ENCODE measurements at regions of chr5 and their contacts with region 1.

Region 1: GRCh38 chr5:138503487-138504270 is 38.4 kb downstream of the EGR1 start:
- DNase-seq: no peak
- H3K4me3 ChIP-seq: no peak overlapping the region
- H3K27ac ChIP-seq: no peak overlapping the region
- H3K4me1 ChIP-seq: no peaks in the 10 kb centered on the region
- H3K27me3 ChIP-seq: no peaks in the 10 kb centered on the region
- CTCF ChIP-seq: peak; percentile 55 to 90 (median 85)
- EP300 ChIP-seq: no peak
- POLR2A ChIP-seq: 0 out of 3 replicates have a peak, but pooled peaks of 1 of the 2 experiments have one; percentile 33
- RAD21 ChIP-seq: peak; percentile 85 to 88

Region 2: DNA sequence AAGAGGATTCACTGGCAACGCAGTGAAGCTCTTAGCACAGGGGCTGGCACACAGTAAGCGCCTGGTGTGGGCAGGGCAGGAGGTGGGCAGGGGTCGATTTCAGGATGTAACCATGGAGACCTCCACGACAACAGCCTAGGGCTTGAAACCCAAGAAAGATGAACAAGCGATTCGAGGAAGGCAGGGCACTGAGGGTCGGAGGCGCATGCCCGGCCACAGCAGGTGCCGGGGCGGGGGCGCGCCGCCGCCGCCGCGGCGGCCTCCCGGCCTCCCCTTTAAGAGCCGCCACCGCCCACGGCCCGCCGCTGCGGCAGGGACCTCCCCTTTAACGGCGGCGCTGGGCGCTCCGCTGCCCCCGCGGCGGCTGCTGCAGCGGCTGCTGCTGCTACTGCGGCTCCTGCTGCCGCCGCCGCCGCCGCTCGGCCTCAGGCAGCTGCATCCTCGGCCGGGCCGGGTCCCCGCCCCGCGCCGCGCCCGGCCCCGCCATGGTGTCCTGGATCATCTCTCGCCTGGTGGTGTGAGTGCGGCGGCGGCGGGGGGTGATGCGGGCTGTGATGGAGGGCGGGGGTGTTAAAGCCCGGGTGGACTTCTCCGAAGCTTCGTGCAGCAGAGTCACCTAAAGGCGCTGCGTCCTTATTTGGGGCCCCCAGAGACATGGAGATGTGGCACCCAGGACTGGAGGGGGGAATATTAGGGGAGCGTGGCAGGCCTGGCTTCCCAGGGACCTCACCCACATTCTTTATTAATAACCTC is 64.8 kb before region 1 on chr5 and contains the start of gene REEP2:
- CTCF ChIA-PET with region 1: interaction called, 532 read pairs
- POLR2A ChIA-PET with region 1: interaction called, 17 read pairs
- DNase-seq: peak; percentile 34 to 72
- H3K4me3 ChIP-seq: peak within 1 kb of the TSS; percentile 74 to 98 (median 84)
- H3K27ac ChIP-seq: no peak within 1 kb of the TSS
- H3K4me1 ChIP-seq: peaks cover 0 to 20% (median 14%) of the 10 kb centered on the region in 4 experiments; a peak in 6 of 7 replicates
- H3K27me3 ChIP-seq: no peaks in the 10 kb centered on the region
- CTCF ChIP-seq: no peak
- EP300 ChIP-seq: peak in 1 of 2 experiments; percentile 85; a peak in 1 of 3 replicates
- POLR2A ChIP-seq: no peak
- RAD21 ChIP-seq: no peak
- total RNA-seq, gene REEP2: 40.2 and 41.4 TPM in 2 replicates

Region 3: DNA sequence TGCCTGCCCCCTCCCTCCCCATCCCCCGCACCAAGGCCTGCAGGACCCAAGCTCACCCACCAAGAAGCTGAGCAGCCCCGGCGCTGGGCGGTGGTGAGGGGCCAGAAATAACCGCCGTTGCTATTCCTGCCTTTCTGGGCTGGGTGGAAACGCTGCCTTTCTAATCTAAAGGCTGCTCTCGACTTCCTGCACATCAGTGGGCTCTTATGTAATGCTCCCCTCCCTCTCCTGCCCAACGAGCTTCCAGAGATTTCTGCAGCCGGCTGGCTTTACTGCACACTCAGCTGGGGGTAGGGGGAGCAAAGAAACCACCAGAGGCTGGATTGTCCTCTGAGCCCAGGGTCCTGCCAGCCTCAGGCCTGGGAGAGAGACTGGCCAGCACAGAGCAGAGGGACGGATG is 45.3 kb before region 1 on chr5:
- CTCF ChIA-PET with region 1: interaction called, 532 read pairs
- POLR2A ChIA-PET with region 1: interaction called, 294 read pairs
- DNase-seq: no peak
- H3K4me3 ChIP-seq: no peak overlapping the region
- H3K27ac ChIP-seq: no peak overlapping the region
- H3K4me1 ChIP-seq: peaks cover 0 to 14% (median 7%) of the 10 kb centered on the region in 4 experiments; a peak in 4 of 7 replicates
- H3K27me3 ChIP-seq: no peaks in the 10 kb centered on the region
- CTCF ChIP-seq: no peak
- EP300 ChIP-seq: no peak
- POLR2A ChIP-seq: no peak
- RAD21 ChIP-seq: no peak

Region 4: GRCh38 chr5:138482638-138483037 is 21.0 kb before region 1 on chr5:
- CTCF ChIA-PET with region 1: interaction called, 34 read pairs
- POLR2A ChIA-PET with region 1: interaction called, 10 read pairs
- DNase-seq: no peak
- H3K4me3 ChIP-seq: no peak overlapping the region
- H3K27ac ChIP-seq: no peak overlapping the region
- H3K4me1 ChIP-seq: no peaks in the 10 kb centered on the region
- H3K27me3 ChIP-seq: no peaks in the 10 kb centered on the region
- CTCF ChIP-seq: no peak
- EP300 ChIP-seq: no peak
- POLR2A ChIP-seq: no peak
- RAD21 ChIP-seq: no peak

Region 5: GRCh38 chr5:138515556-138516245 is 12.0 kb after region 1 on chr5:
- CTCF ChIA-PET with region 1: interaction called, 24 read pairs
- POLR2A ChIA-PET with region 1: interaction called, 11 read pairs
- DNase-seq: no peak
- H3K4me3 ChIP-seq: no peak overlapping the region
- H3K27ac ChIP-seq: no peak overlapping the region
- H3K4me1 ChIP-seq: no peaks in the 10 kb centered on the region
- H3K27me3 ChIP-seq: no peaks in the 10 kb centered on the region
- CTCF ChIP-seq: no peak
- EP300 ChIP-seq: no peak
- POLR2A ChIP-seq: no peak
- RAD21 ChIP-seq: no peak

Region 6: GRCh38 chr5:138542956-138543729 is 39.5 kb after region 1 on chr5 and contains the start of gene ETF1:
- CTCF ChIA-PET with region 1: interaction called, 16 read pairs
- POLR2A ChIA-PET with region 1: interaction called, 13 read pairs
- DNase-seq: peak; percentile 98
- H3K4me3 ChIP-seq: peak within 1 kb of the TSS; percentile 89 to 100 (median 95)
- H3K27ac ChIP-seq: peak within 1 kb of the TSS; percentile 100
- H3K4me1 ChIP-seq: peaks cover 0 to 16% (median 2%) of the 10 kb centered on the region in 4 experiments; a peak in 4 of 7 replicates
- H3K27me3 ChIP-seq: no peaks in the 10 kb centered on the region
- CTCF ChIP-seq: no peak
- EP300 ChIP-seq: peak in 1 of 2 experiments; percentile 72; a peak in 2 of 3 replicates
- POLR2A ChIP-seq: peak; percentile 77 to 82
- RAD21 ChIP-seq: no peak
- total RNA-seq, gene ETF1: 168 TPM in 2 replicates

Region 7: DNA sequence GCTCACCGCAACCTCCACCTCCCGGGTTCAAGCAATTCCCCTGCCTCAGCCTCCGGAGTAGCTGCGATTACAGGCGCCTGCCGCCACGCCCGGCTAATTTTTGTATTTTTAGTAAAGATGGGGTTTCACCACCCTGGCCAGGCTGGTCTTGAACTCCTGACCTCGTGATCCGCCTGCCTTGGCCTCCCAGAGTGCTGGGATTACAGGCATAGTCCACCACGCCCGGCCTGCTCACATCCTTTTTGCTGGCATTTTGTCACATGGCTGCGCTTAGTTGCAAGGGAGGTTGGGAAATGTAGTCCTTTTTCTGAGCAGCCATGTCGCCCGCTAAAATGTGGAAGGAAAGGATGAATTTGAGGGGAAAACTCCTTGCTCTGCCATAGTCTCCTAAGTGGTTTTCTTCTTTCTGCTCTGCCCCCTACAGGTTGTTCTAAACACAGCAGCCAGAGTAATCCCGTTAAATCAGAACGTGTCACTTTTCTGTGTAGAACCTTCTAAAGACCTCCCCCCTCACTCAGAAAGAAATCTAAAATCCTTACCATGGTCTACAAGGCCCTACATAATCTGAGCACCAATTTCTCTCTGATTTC is 129.3 kb after region 1 on chr5:
- CTCF ChIA-PET with region 1: no interaction called
- POLR2A ChIA-PET with region 1: no interaction called
- DNase-seq: peak; percentile 75 to 87
- H3K4me3 ChIP-seq: no peak overlapping the region
- H3K27ac ChIP-seq: no peak overlapping the region
- H3K4me1 ChIP-seq: no peaks in the 10 kb centered on the region; a peak in 1 of 7 replicates
- H3K27me3 ChIP-seq: no peaks in the 10 kb centered on the region
- CTCF ChIP-seq: peak in 2 of 3 experiments; percentile 68 to 80; a peak in 3 of 4 replicates
- EP300 ChIP-seq: no peak
- POLR2A ChIP-seq: no peak
- RAD21 ChIP-seq: peak; percentile 57 to 72

Measured in H1 (cell line).